Prostate gland (tissue), 2 donors: ENCODE measurements at regions of chr13 and their contacts with region 1.

Region 1: GRCh38 chr13:40922437-40923040 is 96.6 kb downstream of the ELF1 start:
- DNase-seq: no peak
- H3K4me3 ChIP-seq: no peak overlapping the region
- H3K27ac ChIP-seq: no peak overlapping the region
- H3K4me1 ChIP-seq: no peaks in the 10 kb centered on the region
- H3K27me3 ChIP-seq: no peaks in the 10 kb centered on the region
- CTCF ChIP-seq: no peak
- POLR2A ChIP-seq: no peak

Region 2: GRCh38 chr13:40789275-40790133 is 133.0 kb before region 1 on chr13 and contains the start of gene SLC25A15:
- intact Hi-C with region 1: loop called (anchors 10 kb)
- DNase-seq: peak; percentile 31
- H3K4me3 ChIP-seq: peak within 1 kb of the TSS; percentile 56 to 69
- H3K27ac ChIP-seq: peak within 1 kb of the TSS; percentile 76 to 83
- H3K4me1 ChIP-seq: no peaks in the 10 kb centered on the region
- H3K27me3 ChIP-seq: no peaks in the 10 kb centered on the region
- CTCF ChIP-seq: peak in 2 of 4 experiments; percentile 20 to 58
- POLR2A ChIP-seq: peak; percentile 29
- total RNA-seq, gene SLC25A15: 7.4 to 32.8 TPM

Region 3: GRCh38 chr13:41029629-41030028 is 107.1 kb after region 1 on chr13:
- intact Hi-C with region 1: no loop called
- DNase-seq: no peak
- H3K4me3 ChIP-seq: no peak overlapping the region
- H3K27ac ChIP-seq: no peak overlapping the region
- H3K4me1 ChIP-seq: no peaks in the 10 kb centered on the region
- H3K27me3 ChIP-seq: no peaks in the 10 kb centered on the region
- CTCF ChIP-seq: no peak
- POLR2A ChIP-seq: no peak